Activated B cell treated with CpG ODN at 0.5 μM for 24 hours (primary cell): ENCODE measurements at regions of chr16 and their contacts with region 1.

Region 1: DNA sequence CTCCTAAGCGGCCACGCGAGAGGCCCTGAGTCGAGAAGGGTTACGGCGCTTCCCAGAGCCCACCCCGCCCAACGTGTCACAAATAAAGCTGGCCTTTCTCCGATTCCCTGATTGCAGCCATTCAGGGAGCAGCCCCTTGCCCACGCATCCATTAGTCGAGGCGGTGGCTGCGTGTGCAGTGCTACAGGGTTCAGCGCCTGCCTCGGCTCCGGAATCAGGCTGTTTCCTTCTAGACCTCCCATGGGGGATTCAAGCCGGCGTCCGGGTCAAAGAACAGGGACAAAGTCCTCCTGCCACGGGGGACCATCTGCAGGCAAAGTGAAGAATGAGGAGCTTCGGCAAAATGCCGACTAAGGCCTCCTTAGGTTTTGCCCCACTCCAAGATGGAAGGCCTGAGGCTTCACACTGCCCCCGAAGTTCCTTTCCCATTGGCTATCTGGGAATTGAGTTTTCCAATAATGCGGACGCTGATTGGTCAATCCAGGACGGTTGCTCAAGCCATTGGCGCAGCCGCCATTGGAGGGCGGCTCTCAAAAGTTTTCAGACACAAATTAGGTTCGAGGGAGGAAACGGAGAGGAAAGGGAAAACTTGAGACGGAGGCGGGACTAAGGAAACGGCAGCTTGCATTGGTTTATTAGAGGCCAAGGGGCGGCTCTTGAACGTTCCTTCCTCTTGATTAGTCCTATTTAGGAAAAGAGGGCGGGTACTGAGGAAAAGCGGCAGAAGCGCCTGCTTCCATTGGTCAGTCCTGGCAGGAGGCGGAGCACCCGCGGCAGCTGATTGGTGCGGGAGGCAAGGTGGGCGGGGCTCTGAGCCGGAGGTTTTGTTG is 430 bp upstream of the KATNB1 start:
- DNase-seq: peak; percentile 94
- ATAC-seq: peak; percentile 93
- H3K4me3 Mint-ChIP-seq: peak overlapping the region; percentile 95
- H3K27ac Mint-ChIP-seq: peak overlapping the region; percentile 98
- H3K4me1 Mint-ChIP-seq: peaks cover 30% of the 10 kb centered on the region
- H3K27me3 Mint-ChIP-seq: no peaks in the 10 kb centered on the region
- CTCF ChIP-seq: no peak

Region 2: GRCh38 chr16:57413301-57413730 is 321.8 kb before region 1 on chr16:
- CTCF ChIA-PET with region 1: no interaction called
- POLR2A ChIA-PET with region 1: no interaction called
- intact Hi-C with region 1: loop called (anchors 10 kb)
- DNase-seq: peak; percentile 52
- ATAC-seq: peak; percentile 89
- H3K4me3 Mint-ChIP-seq: peak overlapping the region; percentile 69
- H3K27ac Mint-ChIP-seq: peak overlapping the region; percentile 81
- H3K4me1 Mint-ChIP-seq: peaks cover 68% of the 10 kb centered on the region
- H3K27me3 Mint-ChIP-seq: no peaks in the 10 kb centered on the region
- CTCF ChIP-seq: no peak

Region 3: DNA sequence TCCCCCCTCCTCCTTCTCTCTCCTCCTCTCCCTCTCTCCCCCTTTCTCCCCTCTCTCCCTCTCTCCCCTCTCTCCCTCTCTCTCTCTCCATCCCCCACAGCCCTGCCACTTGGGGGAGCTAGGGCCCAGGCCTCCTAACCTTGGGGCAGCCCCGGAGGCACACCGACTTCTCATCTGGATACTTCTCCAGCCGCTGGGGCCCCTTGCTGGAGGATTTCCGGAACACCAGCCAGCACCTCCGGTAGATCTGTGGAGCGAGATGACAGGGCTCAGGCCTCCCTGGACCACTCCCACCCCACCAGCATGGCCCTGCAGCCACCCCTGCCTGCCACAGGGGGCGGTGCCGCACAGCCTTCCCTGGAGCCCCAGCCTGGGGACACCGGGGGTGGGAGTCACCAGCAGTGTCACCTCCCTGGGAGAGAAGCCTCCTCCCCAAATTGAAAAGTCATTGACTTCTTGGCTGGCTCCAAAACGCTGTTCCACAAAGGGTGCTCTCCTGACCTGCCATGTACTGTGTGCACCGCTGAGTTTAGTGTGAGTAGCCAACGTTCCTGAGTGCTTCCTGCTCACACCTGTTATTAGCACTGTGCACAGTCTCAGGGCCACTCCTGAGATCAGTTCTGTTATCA is 259.3 kb before region 1 on chr16:
- CTCF ChIA-PET with region 1: no interaction called
- POLR2A ChIA-PET with region 1: no interaction called
- intact Hi-C with region 1: loop called (anchors 5 kb)
- DNase-seq: peak; percentile 69
- ATAC-seq: peak; percentile 92
- H3K4me3 Mint-ChIP-seq: no peak overlapping the region
- H3K27ac Mint-ChIP-seq: no peak overlapping the region
- H3K4me1 Mint-ChIP-seq: peaks cover 40% of the 10 kb centered on the region
- H3K27me3 Mint-ChIP-seq: peaks cover 7% of the 10 kb centered on the region
- CTCF ChIP-seq: peak; percentile 51

Region 4: GRCh38 chr16:57689762-57690558 is 45.2 kb before region 1 on chr16:
- CTCF ChIA-PET with region 1: no interaction called
- POLR2A ChIA-PET with region 1: interaction called, 12 read pairs
- intact Hi-C with region 1: loop called (anchors 1 kb)
- DNase-seq: peak; percentile 45
- ATAC-seq: peak; percentile 74
- H3K4me3 Mint-ChIP-seq: peak overlapping the region; percentile 36
- H3K27ac Mint-ChIP-seq: peak overlapping the region; percentile 82
- H3K4me1 Mint-ChIP-seq: peaks cover 28% of the 10 kb centered on the region
- H3K27me3 Mint-ChIP-seq: no peaks in the 10 kb centered on the region
- CTCF ChIP-seq: no peak

Region 5: DNA sequence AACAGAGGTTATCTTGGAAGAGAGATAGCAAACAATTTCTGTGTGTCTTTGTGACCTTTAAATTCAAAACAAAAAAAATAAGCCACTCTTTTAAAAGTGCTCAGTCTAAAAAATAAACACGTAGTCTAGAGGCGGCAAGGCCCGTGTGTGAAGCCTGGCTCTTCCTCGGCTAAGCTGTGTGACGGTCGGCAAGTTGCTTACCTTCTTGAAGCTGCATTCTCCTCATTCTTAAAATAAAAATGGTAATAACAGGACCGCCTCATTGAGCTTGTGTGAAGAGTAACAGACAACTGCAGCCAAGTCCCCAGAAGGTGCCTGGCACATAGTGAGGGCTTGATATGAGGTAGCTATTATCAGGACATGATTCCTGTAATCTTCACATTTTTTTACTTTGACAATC is 55.3 kb after region 1 on chr16:
- CTCF ChIA-PET with region 1: no interaction called
- POLR2A ChIA-PET with region 1: interaction called, 11 read pairs
- intact Hi-C with region 1: no loop called
- DNase-seq: no peak
- ATAC-seq: no peak
- H3K4me3 Mint-ChIP-seq: no peak overlapping the region
- H3K27ac Mint-ChIP-seq: no peak overlapping the region
- H3K4me1 Mint-ChIP-seq: no peaks in the 10 kb centered on the region
- H3K27me3 Mint-ChIP-seq: peaks cover 2% of the 10 kb centered on the region
- CTCF ChIP-seq: no peak

Region 6: GRCh38 chr16:58129097-58129936 is 394.2 kb after region 1 on chr16 and contains the start of gene CFAP20:
- CTCF ChIA-PET with region 1: no interaction called
- POLR2A ChIA-PET with region 1: interaction called, 4 read pairs
- intact Hi-C with region 1: loop called (anchors 1 kb)
- DNase-seq: peak; percentile 90
- ATAC-seq: peak; percentile 91
- H3K4me3 Mint-ChIP-seq: peak within 1 kb of the TSS; percentile 89
- H3K27ac Mint-ChIP-seq: peak within 1 kb of the TSS; percentile 85
- H3K4me1 Mint-ChIP-seq: peaks cover 48% of the 10 kb centered on the region
- H3K27me3 Mint-ChIP-seq: no peaks in the 10 kb centered on the region
- CTCF ChIP-seq: no peak
- total RNA-seq, gene CFAP20: 20.2 and 24.9 TPM in 2 replicates